Pancreas (tissue), 10 donors: ENCODE measurements at regions of chr15 and their contacts with region 1.

Region 1: DNA sequence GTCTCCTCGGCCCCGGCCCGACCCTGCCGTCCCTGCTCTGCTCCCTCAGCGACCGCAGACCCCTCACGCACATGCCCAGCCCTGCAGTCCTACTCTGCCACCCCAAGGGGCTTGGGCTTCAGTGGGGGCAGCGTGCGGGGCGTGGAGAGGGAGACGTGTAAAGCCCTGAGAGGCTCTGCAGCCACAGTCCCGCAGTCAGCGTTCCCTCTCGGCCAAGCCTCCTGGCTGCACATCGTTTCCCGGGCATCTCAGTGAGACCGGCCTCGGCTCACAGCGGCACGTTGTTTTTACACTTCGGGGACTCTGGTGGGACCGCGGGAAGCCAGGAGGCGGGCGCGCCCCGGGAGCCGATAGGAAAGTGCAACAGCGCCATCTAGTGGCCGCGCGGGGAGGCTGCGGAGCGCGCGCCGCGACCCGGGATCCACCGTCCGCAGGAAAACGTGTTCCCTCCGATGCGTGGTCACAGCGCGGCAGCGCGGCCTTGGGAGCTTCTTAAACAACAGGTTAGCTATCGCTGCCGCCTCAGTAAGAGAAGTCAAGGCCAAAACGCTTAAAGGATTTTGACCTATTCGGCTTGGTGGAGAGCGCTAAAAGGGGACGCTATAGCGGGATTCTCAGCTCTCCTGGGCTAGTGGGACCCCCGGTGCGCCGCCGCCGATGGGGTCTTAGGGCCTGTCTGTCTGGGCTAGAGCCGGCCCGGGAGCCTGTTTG is 226.8 kb upstream of the IGF1R start:
- DNase-seq: peak; percentile 23 to 95 (median 66)
- ATAC-seq: peak; percentile 88 to 91 (median 91)
- H3K4me3 ChIP-seq: peak overlapping the region in 2 of 4 donors; percentile 23 to 25
- H3K27ac ChIP-seq: no peak overlapping the region
- H3K4me1 ChIP-seq: peaks cover 0 to 2% (median 0%) of the 10 kb centered on the region in 3 donors
- H3K27me3 ChIP-seq: peaks cover 0 to 20% (median 5%) of the 10 kb centered on the region in 4 donors
- CTCF ChIP-seq: peak; percentile 99 to 100 (median 100)

Region 2: GRCh38 chr15:98315971-98316370 is 105.6 kb before region 1 on chr15:
- intact Hi-C with region 1: loop called in 2 of 3 experiments (anchors 2 to 5 kb)
- DNase-seq: no peak
- ATAC-seq: no peak
- H3K4me3 ChIP-seq: no peak overlapping the region
- H3K27ac ChIP-seq: no peak overlapping the region
- H3K4me1 ChIP-seq: no peaks in the 10 kb centered on the region
- H3K27me3 ChIP-seq: peaks cover 0 to 3% (median 0%) of the 10 kb centered on the region in 4 donors
- CTCF ChIP-seq: no peak

Region 3: GRCh38 chr15:98330692-98331435 is 90.7 kb before region 1 on chr15:
- intact Hi-C with region 1: no loop called
- DNase-seq: no peak
- ATAC-seq: peak in 1 of 4 donors; percentile 51
- H3K4me3 ChIP-seq: no peak overlapping the region
- H3K27ac ChIP-seq: no peak overlapping the region
- H3K4me1 ChIP-seq: no peaks in the 10 kb centered on the region
- H3K27me3 ChIP-seq: peaks cover 0 to 3% (median 0%) of the 10 kb centered on the region in 4 donors
- CTCF ChIP-seq: no peak

Region 4: GRCh38 chr15:98700519-98700918 is 278.9 kb after region 1 on chr15:
- intact Hi-C with region 1: no loop called
- DNase-seq: no peak
- ATAC-seq: peak in 2 of 4 donors; percentile 17 to 18
- H3K4me3 ChIP-seq: no peak overlapping the region
- H3K27ac ChIP-seq: no peak overlapping the region
- H3K4me1 ChIP-seq: peaks cover 0 to 15% (median 8%) of the 10 kb centered on the region in 3 donors
- H3K27me3 ChIP-seq: no peaks in the 10 kb centered on the region
- CTCF ChIP-seq: no peak